Upper lobe of right lung (tissue), 1 donor: ENCODE measurements at regions of chr20 and their contacts with region 1.

Region 1: GRCh38 chr20:41339507-41340326 is 904 bp upstream of the LPIN3 start:
- DNase-seq: peak; percentile 94
- ATAC-seq: peak; percentile 93
- H3K4me3 ChIP-seq: peak overlapping the region; percentile 57
- H3K27ac ChIP-seq: peak overlapping the region; percentile 53
- H3K4me1 ChIP-seq: peaks cover 14% of the 10 kb centered on the region
- H3K27me3 ChIP-seq: no peaks in the 10 kb centered on the region
- CTCF ChIP-seq: peak; percentile 99

Region 2: GRCh38 chr20:41136680-41137613 is 202.8 kb before region 1 on chr20 and contains the start of gene PLCG1:
- intact Hi-C with region 1: loop called (anchors 10 kb)
- DNase-seq: peak; percentile 94
- ATAC-seq: peak; percentile 90
- H3K4me3 ChIP-seq: peak within 1 kb of the TSS; percentile 90
- H3K27ac ChIP-seq: peak within 1 kb of the TSS; percentile 93
- H3K4me1 ChIP-seq: peaks cover 40% of the 10 kb centered on the region
- H3K27me3 ChIP-seq: no peaks in the 10 kb centered on the region
- CTCF ChIP-seq: no peak
- total RNA-seq, gene PLCG1: 120 TPM

Region 3: DNA sequence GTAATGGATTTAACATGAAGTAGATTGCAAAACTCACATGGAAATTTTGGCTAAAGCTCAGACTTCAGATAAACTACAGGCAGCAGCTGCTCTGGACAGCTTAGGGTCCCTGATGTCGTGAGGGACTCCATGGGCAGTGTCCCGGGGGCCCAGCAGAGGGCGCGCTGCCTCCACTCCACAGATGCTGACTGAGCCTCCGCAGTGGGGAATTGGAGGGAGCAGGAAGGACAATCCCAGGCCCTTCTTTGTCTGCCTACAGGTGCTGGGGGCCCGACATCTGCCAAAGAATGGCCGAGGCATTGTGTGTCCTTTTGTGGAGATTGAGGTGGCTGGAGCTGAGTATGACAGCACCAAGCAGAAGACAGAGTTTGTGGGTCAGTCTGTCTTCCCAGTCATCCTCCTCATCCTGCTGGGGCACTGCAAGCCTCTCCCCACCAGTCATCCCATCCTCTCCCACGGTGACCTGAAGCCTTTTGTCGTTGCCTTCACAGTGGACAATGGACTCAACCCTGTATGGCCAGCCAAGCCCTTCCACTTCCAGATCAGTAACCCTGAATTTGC is 166.5 kb before region 1 on chr20:
- intact Hi-C with region 1: loop called (anchors 5 kb)
- DNase-seq: peak; percentile 88
- ATAC-seq: peak; percentile 90
- H3K4me3 ChIP-seq: no peak overlapping the region
- H3K27ac ChIP-seq: peak overlapping the region; percentile 63
- H3K4me1 ChIP-seq: peaks cover 32% of the 10 kb centered on the region
- H3K27me3 ChIP-seq: no peaks in the 10 kb centered on the region
- CTCF ChIP-seq: peak; percentile 97

Region 4: GRCh38 chr20:41249406-41250281 is 90.1 kb before region 1 on chr20:
- intact Hi-C with region 1: loop called (anchors 10 kb)
- DNase-seq: no peak
- ATAC-seq: peak; percentile 62
- H3K4me3 ChIP-seq: no peak overlapping the region
- H3K27ac ChIP-seq: peak overlapping the region; percentile 83
- H3K4me1 ChIP-seq: peaks cover 43% of the 10 kb centered on the region
- H3K27me3 ChIP-seq: no peaks in the 10 kb centered on the region
- CTCF ChIP-seq: peak; percentile 18